Activated CD8-positive, alpha-beta T cell treated with anti-CD3 and anti-CD28 coated beads, Interleukin-2, amount 10 ng/mL, durations not matched to agents 7 days and 5 days (primary cell): ENCODE measurements at regions of chr1 and their contacts with region 1.

Region 1: DNA sequence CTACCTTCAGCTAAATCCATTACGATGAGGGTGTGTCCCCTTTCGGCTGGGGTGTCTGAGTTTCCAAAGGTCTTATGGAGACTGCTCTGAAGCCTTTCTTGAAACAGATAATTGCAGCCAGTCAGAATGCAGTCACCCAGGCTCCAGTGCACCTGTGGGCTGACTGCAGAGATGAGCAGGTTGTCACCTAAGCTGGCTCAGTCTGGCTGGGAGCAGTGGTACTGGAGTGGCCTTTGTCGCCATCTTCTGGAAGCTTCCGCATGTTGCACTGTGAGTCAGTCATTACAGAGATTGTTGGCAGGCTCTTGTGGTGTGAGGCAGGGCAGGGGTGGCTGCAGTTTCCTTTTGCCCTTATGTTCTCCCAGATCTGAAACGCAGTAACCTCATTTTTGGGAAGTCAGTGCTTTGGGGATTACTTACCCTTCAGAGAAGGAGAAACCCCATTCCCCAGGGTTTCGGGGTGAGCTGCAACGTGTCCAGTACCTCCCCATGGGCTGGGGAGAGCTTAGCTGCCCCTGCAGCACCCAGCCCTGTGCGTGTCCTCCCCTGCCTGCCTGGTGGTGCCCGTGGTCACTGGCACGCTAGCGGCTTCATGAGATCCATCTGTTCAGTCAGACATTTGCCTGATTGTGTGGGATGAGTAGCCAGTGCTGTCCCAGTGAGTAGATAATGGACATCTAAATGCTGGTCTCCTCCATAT is 48.0 kb downstream of the SMYD2 start:
- DNase-seq: peak; percentile 86
- ATAC-seq: peak; percentile 94
- H3K4me3 Mint-ChIP-seq: no peak overlapping the region
- H3K27ac Mint-ChIP-seq: no peak overlapping the region
- H3K4me1 Mint-ChIP-seq: peaks cover 12% of the 10 kb centered on the region
- H3K27me3 Mint-ChIP-seq: no peaks in the 10 kb centered on the region

Region 2: DNA sequence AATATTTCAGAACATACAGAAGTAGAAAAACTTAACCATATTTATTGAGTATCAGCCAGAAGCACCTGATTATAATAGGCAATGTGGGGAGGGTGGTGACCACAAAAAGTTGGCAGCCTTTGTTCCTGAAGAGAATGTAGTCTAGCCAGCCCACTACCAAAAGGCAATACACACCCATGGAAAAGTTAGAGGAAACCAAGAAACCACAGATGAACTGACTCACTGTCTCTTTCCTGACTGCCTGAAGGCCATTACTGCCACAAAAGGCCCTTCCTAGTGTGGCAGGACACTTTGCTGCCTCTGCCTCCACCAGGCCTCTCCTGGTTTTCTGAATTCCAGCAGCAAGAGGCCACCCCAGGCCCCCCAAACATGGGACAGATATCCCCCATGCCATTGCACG is 355.8 kb before region 1 on chr1:
- CTCF ChIA-PET with region 1: no interaction called
- POLR2A ChIA-PET with region 1: no interaction called
- DNase-seq: no peak
- ATAC-seq: no peak
- H3K4me3 Mint-ChIP-seq: no peak overlapping the region
- H3K27ac Mint-ChIP-seq: no peak overlapping the region
- H3K4me1 Mint-ChIP-seq: no peaks in the 10 kb centered on the region
- H3K27me3 Mint-ChIP-seq: peaks cover 17% of the 10 kb centered on the region

Region 3: DNA sequence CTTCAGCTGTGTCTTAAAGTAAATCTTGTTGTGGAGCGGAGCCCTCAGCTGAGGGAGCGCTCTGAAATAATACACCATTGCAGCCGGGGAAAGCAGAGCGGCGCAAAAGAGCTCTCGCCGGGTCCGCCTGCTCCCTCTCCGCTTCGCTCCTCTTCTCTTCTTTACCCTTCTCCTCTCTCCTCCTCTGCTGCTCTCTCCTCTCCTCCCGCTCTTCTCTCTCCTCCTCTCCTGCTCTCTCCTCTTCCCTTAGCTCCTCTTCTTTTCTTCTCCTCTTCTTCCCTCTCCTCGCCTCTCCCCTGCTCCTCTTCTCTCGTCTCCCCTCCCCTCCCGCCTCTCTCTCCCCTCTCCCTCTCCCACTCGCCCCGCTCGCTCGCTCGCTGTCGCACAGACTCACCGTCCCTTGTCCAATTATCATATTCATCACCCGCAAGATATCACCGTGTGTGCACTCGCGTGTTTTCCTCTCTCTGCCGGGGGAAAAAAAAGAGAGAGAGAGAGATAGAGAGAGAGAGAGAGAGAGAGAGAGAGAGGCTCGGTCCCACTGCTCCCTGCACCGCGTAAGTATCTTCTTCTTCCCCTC is 340.9 kb before region 1 on chr1 and contains the start of gene PROX1:
- CTCF ChIA-PET with region 1: no interaction called
- POLR2A ChIA-PET with region 1: no interaction called
- DNase-seq: peak; percentile 59
- ATAC-seq: peak; percentile 73
- H3K4me3 Mint-ChIP-seq: peak within 1 kb of the TSS; percentile 79
- H3K27ac Mint-ChIP-seq: peak within 1 kb of the TSS; percentile 70
- H3K4me1 Mint-ChIP-seq: peaks cover 23% of the 10 kb centered on the region
- H3K27me3 Mint-ChIP-seq: peaks cover 85% of the 10 kb centered on the region
- total RNA-seq, gene PROX1: not detected

Region 4: GRCh38 chr1:214135886-214136285 is 193.0 kb before region 1 on chr1:
- CTCF ChIA-PET with region 1: no interaction called
- POLR2A ChIA-PET with region 1: no interaction called
- DNase-seq: no peak
- ATAC-seq: no peak
- H3K4me3 Mint-ChIP-seq: no peak overlapping the region
- H3K27ac Mint-ChIP-seq: no peak overlapping the region
- H3K4me1 Mint-ChIP-seq: no peaks in the 10 kb centered on the region
- H3K27me3 Mint-ChIP-seq: no peaks in the 10 kb centered on the region

Region 5: GRCh38 chr1:214178102-214178501 is 150.8 kb before region 1 on chr1:
- CTCF ChIA-PET with region 1: no interaction called
- POLR2A ChIA-PET with region 1: no interaction called
- DNase-seq: no peak
- ATAC-seq: no peak
- H3K4me3 Mint-ChIP-seq: no peak overlapping the region
- H3K27ac Mint-ChIP-seq: no peak overlapping the region
- H3K4me1 Mint-ChIP-seq: no peaks in the 10 kb centered on the region
- H3K27me3 Mint-ChIP-seq: peaks cover 19% of the 10 kb centered on the region

Region 6: GRCh38 chr1:214271174-214271858 is 57.6 kb before region 1 on chr1:
- CTCF ChIA-PET with region 1: interaction called, 48 read pairs
- POLR2A ChIA-PET with region 1: no interaction called
- DNase-seq: no peak
- ATAC-seq: no peak
- H3K4me3 Mint-ChIP-seq: no peak overlapping the region
- H3K27ac Mint-ChIP-seq: no peak overlapping the region
- H3K4me1 Mint-ChIP-seq: peaks cover 4% of the 10 kb centered on the region
- H3K27me3 Mint-ChIP-seq: peaks cover 36% of the 10 kb centered on the region

Region 7: GRCh38 chr1:214316593-214316992 is 12.3 kb before region 1 on chr1:
- CTCF ChIA-PET with region 1: interaction called, 51 read pairs
- POLR2A ChIA-PET with region 1: no interaction called
- DNase-seq: no peak
- ATAC-seq: no peak
- H3K4me3 Mint-ChIP-seq: no peak overlapping the region
- H3K27ac Mint-ChIP-seq: no peak overlapping the region
- H3K4me1 Mint-ChIP-seq: peaks cover 3% of the 10 kb centered on the region
- H3K27me3 Mint-ChIP-seq: no peaks in the 10 kb centered on the region

Region 8: DNA sequence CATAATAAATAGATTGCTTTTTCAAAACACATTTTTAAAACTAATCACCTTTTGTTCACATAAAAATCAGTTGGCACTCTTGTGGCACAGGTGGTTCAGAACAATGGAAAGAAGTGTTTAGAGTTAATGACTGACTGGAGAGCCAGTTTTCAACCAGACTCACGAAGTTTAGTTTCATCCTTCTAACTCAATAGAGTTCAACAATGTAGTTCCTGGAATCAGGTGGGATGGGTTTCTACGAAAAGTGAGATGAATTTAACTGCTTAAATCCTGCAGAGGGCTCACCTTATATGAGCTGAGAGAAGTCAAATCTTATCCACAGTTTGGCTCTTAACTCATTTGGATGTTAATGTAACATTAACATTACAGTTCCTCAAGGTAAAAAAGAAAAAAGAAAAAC is 68.6 kb after region 1 on chr1:
- CTCF ChIA-PET with region 1: interaction called, 18 read pairs
- POLR2A ChIA-PET with region 1: interaction called, 3 read pairs
- DNase-seq: peak; percentile 26
- ATAC-seq: peak; percentile 53
- H3K4me3 Mint-ChIP-seq: no peak overlapping the region
- H3K27ac Mint-ChIP-seq: peak overlapping the region; percentile 32
- H3K4me1 Mint-ChIP-seq: peaks cover 37% of the 10 kb centered on the region
- H3K27me3 Mint-ChIP-seq: no peaks in the 10 kb centered on the region

Region 9: DNA sequence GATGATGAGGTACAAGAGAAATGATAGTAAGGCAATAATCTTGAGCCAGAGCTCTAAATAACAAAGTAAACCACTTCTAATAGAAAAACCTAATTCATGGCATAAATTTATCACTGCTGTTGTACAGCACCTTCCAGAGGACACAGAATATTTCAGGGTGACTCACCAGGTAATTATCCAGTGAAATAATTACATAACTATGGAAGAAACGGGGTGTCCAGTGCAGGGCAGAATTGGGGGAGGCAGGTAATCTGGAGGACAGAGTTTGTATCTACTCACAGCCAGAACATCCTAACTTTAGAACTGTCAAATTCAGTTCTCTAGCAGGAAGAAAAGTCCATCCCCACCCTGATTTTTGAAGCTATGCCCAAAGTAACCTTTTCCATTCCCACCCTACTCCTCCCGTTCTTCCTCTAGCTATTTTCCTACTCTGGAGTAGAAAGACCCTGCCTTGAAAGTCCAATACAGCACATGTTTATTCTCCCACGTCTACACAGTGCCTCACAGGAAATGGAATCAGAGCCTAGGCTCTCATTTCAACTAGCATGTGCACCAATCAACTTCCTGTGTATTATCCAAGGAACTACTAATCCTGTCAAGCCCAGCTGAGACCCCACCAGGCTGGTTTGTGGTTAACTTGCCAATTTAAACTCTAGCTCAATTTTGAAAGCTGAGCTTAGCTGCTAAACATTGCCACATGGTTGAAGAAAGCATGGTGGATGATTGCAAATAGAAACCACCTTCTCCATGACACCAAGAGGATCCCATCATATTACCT is 125.9 kb after region 1 on chr1:
- CTCF ChIA-PET with region 1: interaction called, 13 read pairs
- POLR2A ChIA-PET with region 1: no interaction called
- DNase-seq: no peak
- ATAC-seq: no peak
- H3K4me3 Mint-ChIP-seq: no peak overlapping the region
- H3K27ac Mint-ChIP-seq: no peak overlapping the region
- H3K4me1 Mint-ChIP-seq: peaks cover 4% of the 10 kb centered on the region
- H3K27me3 Mint-ChIP-seq: peaks cover 19% of the 10 kb centered on the region

Region 10: DNA sequence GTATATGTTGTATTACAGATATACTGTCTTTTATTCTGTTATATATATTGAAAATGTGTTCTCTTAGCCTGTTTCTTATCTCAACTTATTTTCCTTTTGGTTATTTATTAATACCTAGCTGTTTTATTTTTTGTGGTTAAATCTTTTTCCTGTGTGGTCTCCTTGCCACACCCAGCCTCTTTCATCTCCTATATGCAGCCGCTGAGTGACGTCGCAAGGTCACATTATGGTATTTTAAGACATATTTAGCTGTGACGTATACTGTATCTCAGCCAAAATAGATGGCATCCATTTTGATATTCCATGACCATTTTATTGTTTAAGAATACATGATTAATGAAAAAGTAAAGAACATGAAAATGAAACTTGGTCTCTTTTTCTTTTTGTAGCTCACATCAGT is 303.2 kb after region 1 on chr1:
- CTCF ChIA-PET with region 1: interaction called, 33 read pairs
- POLR2A ChIA-PET with region 1: no interaction called
- DNase-seq: peak; percentile 54
- ATAC-seq: no peak
- H3K4me3 Mint-ChIP-seq: no peak overlapping the region
- H3K27ac Mint-ChIP-seq: peak overlapping the region; percentile 44
- H3K4me1 Mint-ChIP-seq: peaks cover 16% of the 10 kb centered on the region
- H3K27me3 Mint-ChIP-seq: no peaks in the 10 kb centered on the region